ENCODE measurements at regions of chr17 and their contacts with region 1.

Region 1: GRCh38 chr17:55356434-55357328 is 65.0 kb downstream of the MMD start:
- DNase-seq: peak; percentile 86 to 88
- ATAC-seq: peak; percentile 100
- H3K4me3 ChIP-seq: no peak overlapping the region
- H3K27ac ChIP-seq: peak overlapping the region; percentile 29 to 33; a peak in 3 of 6 replicates
- H3K4me1 ChIP-seq: no peaks in the 10 kb centered on the region
- CTCF ChIP-seq: peak; percentile 82
- EP300 ChIP-seq: no peak
- POLR2A ChIP-seq: no peak
- RAD21 ChIP-seq: peak; percentile 78 to 81

Region 2: GRCh38 chr17:55303701-55304145 is 53.0 kb before region 1 on chr17:
- CTCF ChIA-PET with region 1: interaction called, 14 read pairs
- POLR2A ChIA-PET with region 1: no interaction called
- DNase-seq: no peak
- ATAC-seq: peak in 1 of 2 experiments; percentile 41; a peak in 3 of 6 replicates
- H3K4me3 ChIP-seq: no peak overlapping the region
- H3K27ac ChIP-seq: no peak overlapping the region
- H3K4me1 ChIP-seq: no peaks in the 10 kb centered on the region; the same call in 2 of the 3 replicates
- CTCF ChIP-seq: 0 out of 3 replicates have a peak, but pooled peaks have one; percentile 10
- EP300 ChIP-seq: no peak
- POLR2A ChIP-seq: no peak
- RAD21 ChIP-seq: no peak; a peak in 1 of 5 replicates

Region 3: DNA sequence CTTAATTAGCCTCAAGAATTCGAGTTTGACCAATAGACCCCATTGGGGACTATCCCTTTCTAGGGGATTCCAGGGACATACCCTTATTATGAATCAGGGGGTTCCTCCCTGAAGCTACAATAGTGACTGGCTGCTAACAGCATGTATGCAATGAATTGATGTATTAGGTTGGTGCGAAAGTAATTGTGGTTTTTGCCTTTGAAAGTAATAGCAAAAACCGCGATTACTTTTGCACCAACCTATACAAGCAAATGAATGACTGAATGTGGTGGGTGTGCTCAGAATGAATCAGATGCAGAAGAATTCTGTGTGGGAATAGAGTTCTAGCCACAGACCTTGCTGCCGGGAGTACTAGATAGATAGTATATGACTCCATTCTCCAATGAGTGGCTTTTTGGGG is 15.2 kb before region 1 on chr17:
- CTCF ChIA-PET with region 1: interaction called, 92 read pairs
- POLR2A ChIA-PET with region 1: no interaction called
- DNase-seq: no peak
- ATAC-seq: no peak
- H3K4me3 ChIP-seq: no peak overlapping the region
- H3K27ac ChIP-seq: no peak overlapping the region
- H3K4me1 ChIP-seq: no peaks in the 10 kb centered on the region
- CTCF ChIP-seq: no peak
- EP300 ChIP-seq: no peak
- POLR2A ChIP-seq: no peak
- RAD21 ChIP-seq: no peak

Region 4: GRCh38 chr17:55388842-55389241 is 32.2 kb after region 1 on chr17:
- CTCF ChIA-PET with region 1: interaction called, 19 read pairs
- POLR2A ChIA-PET with region 1: no interaction called
- DNase-seq: no peak
- ATAC-seq: peak in 1 of 2 experiments; percentile 11; a peak in 2 of 6 replicates
- H3K4me3 ChIP-seq: no peak overlapping the region
- H3K27ac ChIP-seq: no peak overlapping the region
- H3K4me1 ChIP-seq: no peaks in the 10 kb centered on the region
- CTCF ChIP-seq: no peak
- EP300 ChIP-seq: no peak
- POLR2A ChIP-seq: no peak
- RAD21 ChIP-seq: no peak

Region 5: DNA sequence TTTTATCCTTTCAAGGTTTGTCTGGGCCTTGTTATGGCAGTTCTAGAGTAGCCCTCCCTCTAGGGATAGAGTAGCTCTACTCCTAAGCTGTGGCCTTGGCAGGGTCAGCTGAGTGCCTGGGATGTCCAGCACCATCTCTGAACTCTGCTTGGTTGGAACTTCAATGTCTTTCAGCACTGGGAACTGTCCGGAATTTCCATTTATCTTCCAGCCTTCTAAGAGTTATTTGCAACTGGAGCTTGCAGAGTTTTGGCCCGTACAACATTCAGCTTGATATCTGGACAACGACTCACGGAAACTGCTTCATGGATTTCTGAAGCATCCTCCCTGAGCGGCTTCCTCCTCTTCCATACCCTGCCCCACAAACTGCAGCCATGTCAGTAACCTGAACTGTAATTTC is 42.0 kb after region 1 on chr17:
- CTCF ChIA-PET with region 1: interaction called, 17 read pairs
- POLR2A ChIA-PET with region 1: no interaction called
- DNase-seq: no peak
- ATAC-seq: peak in 1 of 2 experiments; percentile 34; a peak in 2 of 6 replicates
- H3K4me3 ChIP-seq: no peak overlapping the region
- H3K27ac ChIP-seq: no peak overlapping the region
- H3K4me1 ChIP-seq: peaks cover 23% of the 10 kb centered on the region
- CTCF ChIP-seq: no peak
- EP300 ChIP-seq: no peak
- POLR2A ChIP-seq: no peak
- RAD21 ChIP-seq: no peak

Region 6: DNA sequence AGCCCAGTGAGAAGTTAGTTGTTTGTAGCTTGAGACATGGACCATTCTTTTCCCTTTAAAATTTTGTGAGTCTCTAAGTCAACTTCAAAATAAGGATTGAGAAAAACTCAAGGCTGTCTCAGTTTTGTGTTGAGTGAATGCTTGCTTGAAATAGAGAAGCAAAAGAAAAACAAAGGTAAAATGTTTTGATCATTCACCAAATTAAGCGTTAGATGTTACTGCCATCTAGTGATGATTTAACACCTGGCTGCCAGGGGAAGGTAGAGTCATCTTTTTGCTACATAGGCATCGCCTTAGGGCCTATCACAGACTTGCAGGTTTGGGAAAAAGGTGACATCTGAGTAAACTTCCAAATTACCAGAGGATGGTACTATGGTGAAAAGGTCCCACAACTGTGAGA is 468.5 kb after region 1 on chr17:
- CTCF ChIA-PET with region 1: no interaction called
- POLR2A ChIA-PET with region 1: no interaction called
- DNase-seq: peak; percentile 10 to 13
- ATAC-seq: peak; percentile 43 to 65; a peak in 3 of 6 replicates
- H3K4me3 ChIP-seq: no peak overlapping the region
- H3K27ac ChIP-seq: no peak overlapping the region
- H3K4me1 ChIP-seq: no peaks in the 10 kb centered on the region
- CTCF ChIP-seq: peak; percentile 42
- EP300 ChIP-seq: no peak
- POLR2A ChIP-seq: no peak
- RAD21 ChIP-seq: peak; percentile 47 to 58; a peak in 4 of 5 replicates

Region 7: DNA sequence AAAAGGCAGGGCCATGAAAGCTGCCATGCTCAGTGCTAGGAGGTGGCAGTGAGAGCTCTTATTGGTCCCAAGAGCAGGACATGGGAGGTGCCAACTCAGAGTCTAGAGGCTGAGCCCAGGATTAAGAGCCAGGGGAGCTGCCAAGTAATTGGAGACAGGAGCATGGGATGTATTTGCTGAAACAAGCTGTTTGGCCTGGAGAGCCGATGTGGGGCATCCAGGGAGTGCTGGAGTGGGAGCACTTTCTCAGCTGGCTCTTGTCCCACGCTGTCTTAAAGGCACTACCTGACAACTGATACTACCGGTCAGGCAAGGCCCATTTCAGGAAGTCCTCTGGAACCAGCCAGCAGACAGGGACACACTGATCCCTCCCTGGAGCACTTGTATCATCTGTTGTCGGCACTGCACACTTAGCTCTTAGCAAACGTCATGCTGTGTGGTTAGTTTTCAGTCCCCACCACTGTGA is 815.9 kb after region 1 on chr17:
- CTCF ChIA-PET with region 1: no interaction called
- POLR2A ChIA-PET with region 1: no interaction called
- DNase-seq: no peak
- ATAC-seq: peak in 1 of 2 experiments; percentile 35; a peak in 3 of 6 replicates
- H3K4me3 ChIP-seq: no peak overlapping the region
- H3K27ac ChIP-seq: no peak overlapping the region
- H3K4me1 ChIP-seq: peaks cover 3% of the 10 kb centered on the region; the same call in 1 of the 3 replicates
- CTCF ChIP-seq: no peak
- EP300 ChIP-seq: no peak
- POLR2A ChIP-seq: no peak
- RAD21 ChIP-seq: no peak

Measured in A549 (cell line).